Naive thymus-derived CD8-positive, alpha-beta T cell (primary cell): ENCODE measurements at regions of chr5 and their contacts with region 1.

Region 1: DNA sequence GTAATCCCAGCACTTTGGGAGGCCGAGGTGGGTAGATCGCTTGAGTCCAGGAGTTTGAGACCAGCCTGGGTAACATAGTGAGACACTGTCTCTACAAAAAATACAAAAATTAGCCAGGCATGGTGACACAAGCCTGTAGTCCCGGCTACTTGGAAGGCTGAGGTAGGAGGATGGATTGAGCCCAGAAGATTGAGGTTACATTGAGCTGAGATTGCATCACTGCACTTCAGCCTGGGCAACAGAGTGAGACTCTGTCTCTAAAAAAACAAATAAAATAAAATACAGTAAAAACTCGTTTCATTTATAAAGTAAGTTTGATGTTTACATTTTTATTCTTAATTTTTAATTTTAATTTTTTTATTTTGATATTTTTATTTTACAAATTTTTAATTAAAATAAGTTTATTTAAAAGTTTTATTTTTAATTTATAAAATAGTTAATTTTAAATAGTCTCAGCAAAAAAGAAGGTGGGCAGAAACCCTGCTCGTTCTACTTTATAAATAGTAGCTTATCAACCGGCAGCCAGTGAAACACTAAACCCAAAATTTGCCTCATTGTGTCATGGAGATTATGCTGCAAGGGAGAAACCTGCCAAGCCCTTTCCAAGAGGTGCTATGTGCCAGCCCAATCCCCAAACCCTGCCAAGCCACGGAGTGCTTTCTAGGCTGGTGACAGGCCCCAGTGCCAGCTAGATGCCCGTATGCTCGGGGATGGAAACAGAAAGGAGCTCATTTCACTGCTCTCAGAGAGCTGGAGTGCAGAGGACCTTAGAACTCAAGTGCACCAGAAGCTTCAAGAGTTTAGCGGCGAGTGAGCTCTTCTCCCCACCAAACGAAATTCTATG is 38.9 kb downstream of the SERINC5 start:
- DNase-seq: peak in 1 of 10 donors; percentile 19
- ATAC-seq: peak; percentile 26 to 35
- H3K4me3 Mint-ChIP-seq: peak overlapping the region; percentile 46 to 92 (median 82)
- H3K27ac Mint-ChIP-seq: peak overlapping the region; percentile 85 to 98 (median 94)
- H3K4me1 Mint-ChIP-seq: peaks cover 51 to 95% (median 93%) of the 10 kb centered on the region in 4 donors
- H3K27me3 Mint-ChIP-seq: no peaks in the 10 kb centered on the region

Region 2: GRCh38 chr5:80204808-80205614 is 12.0 kb before region 1 on chr5:
- POLR2A ChIA-PET with region 1: interaction called, 23 read pairs
- DNase-seq: peak in 2 of 10 donors; percentile 48 to 53
- ATAC-seq: peak; percentile 77 to 90
- H3K4me3 Mint-ChIP-seq: peak overlapping the region; percentile 49 to 82 (median 58)
- H3K27ac Mint-ChIP-seq: peak overlapping the region; percentile 84 to 96 (median 92)
- H3K4me1 Mint-ChIP-seq: peaks cover 43 to 92% (median 88%) of the 10 kb centered on the region in 4 donors
- H3K27me3 Mint-ChIP-seq: no peaks in the 10 kb centered on the region

Region 3: GRCh38 chr5:80231243-80231642 is 14.3 kb after region 1 on chr5:
- POLR2A ChIA-PET with region 1: interaction called, 11 read pairs
- DNase-seq: no peak
- ATAC-seq: no peak
- H3K4me3 Mint-ChIP-seq: peak overlapping the region in 7 of 10 donors; percentile 31 to 70 (median 59)
- H3K27ac Mint-ChIP-seq: peak overlapping the region; percentile 62 to 98 (median 82)
- H3K4me1 Mint-ChIP-seq: peaks cover 38 to 88% (median 81%) of the 10 kb centered on the region in 4 donors
- H3K27me3 Mint-ChIP-seq: no peaks in the 10 kb centered on the region

Region 4: DNA sequence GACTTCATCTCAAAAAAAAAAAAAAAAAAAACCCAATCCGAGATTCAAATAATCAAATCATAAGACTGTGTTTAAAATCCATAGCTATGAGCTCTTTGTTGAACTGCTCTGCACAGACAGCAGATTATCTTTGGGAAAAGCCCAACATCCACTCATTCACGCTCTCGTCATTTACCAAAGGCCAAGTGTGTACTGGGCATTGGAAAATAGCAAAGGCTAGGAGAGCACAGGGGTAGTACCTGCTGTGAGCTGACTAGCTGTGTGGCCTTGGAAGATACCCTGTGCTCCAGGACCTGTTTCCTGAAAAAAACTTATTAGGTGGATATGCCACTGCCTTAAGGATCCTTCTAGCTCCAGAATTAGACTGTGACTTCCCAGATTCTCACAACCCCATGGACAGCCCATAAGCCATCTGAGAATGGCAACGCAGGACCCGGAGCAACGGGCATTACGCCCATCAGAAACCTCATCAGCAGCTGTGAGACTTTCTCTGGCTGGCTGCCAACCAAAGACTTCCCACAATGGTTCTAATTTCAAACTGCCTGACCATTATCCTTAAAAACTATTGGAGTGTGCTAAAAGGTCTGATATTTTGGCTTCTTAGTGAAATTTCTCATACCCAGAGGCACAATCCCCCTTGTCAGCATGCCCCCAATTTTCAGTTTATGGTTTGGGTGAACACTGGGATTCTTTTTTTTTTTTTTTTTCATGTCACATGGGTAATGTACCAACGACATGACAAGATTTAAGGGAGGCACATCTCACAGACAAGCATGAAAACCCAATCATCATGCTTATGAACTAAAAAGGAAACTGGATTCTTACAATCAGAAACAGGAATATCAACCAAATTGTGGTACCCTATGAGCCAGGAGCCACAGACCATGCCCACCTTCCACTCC is 22.1 kb after region 1 on chr5:
- POLR2A ChIA-PET with region 1: interaction called, 15 read pairs
- DNase-seq: peak in 1 of 10 donors; percentile 26
- ATAC-seq: peak; percentile 9 to 30
- H3K4me3 Mint-ChIP-seq: peak overlapping the region; percentile 23 to 85 (median 64)
- H3K27ac Mint-ChIP-seq: peak overlapping the region; percentile 68 to 94 (median 86)
- H3K4me1 Mint-ChIP-seq: peaks cover 39 to 82% (median 75%) of the 10 kb centered on the region in 4 donors
- H3K27me3 Mint-ChIP-seq: no peaks in the 10 kb centered on the region